Activated T-helper 2 cell treated with anti-CD3 and anti-CD28 coated beads, Interferon-gamma antibody, Interleukin-2, Interleukin-4, amounts not matched to agents 10 μg/mL and 5 μg/mL and 100 μg/mL, durations not matched to agents 14 hours and 24 hours and 36 hours (primary cell): ENCODE measurements at regions of chr4 and their contacts with region 1.

Region 1: GRCh38 chr4:142549726-142550463 is 296.2 kb downstream of the INPP4B start:
- DNase-seq: no peak
- H3K4me3 Mint-ChIP-seq: no peak overlapping the region
- H3K27ac Mint-ChIP-seq: peak overlapping the region; percentile 68
- H3K4me1 Mint-ChIP-seq: peaks cover 59% of the 10 kb centered on the region
- H3K27me3 Mint-ChIP-seq: no peaks in the 10 kb centered on the region

Region 2: GRCh38 chr4:142230991-142231390 is 318.9 kb before region 1 on chr4:
- intact Hi-C with region 1: no loop called
- DNase-seq: no peak
- H3K4me3 Mint-ChIP-seq: no peak overlapping the region
- H3K27ac Mint-ChIP-seq: no peak overlapping the region
- H3K4me1 Mint-ChIP-seq: peaks cover 6% of the 10 kb centered on the region
- H3K27me3 Mint-ChIP-seq: no peaks in the 10 kb centered on the region

Region 3: GRCh38 chr4:142353149-142353738 is 196.7 kb before region 1 on chr4:
- intact Hi-C with region 1: loop called (anchors 5 kb)
- DNase-seq: no peak
- H3K4me3 Mint-ChIP-seq: peak overlapping the region; percentile 15
- H3K27ac Mint-ChIP-seq: peak overlapping the region; percentile 88
- H3K4me1 Mint-ChIP-seq: peaks cover 89% of the 10 kb centered on the region
- H3K27me3 Mint-ChIP-seq: no peaks in the 10 kb centered on the region

Region 4: GRCh38 chr4:142435599-142436235 is 114.2 kb before region 1 on chr4:
- intact Hi-C with region 1: no loop called
- DNase-seq: no peak
- H3K4me3 Mint-ChIP-seq: no peak overlapping the region
- H3K27ac Mint-ChIP-seq: no peak overlapping the region
- H3K4me1 Mint-ChIP-seq: peaks cover 13% of the 10 kb centered on the region
- H3K27me3 Mint-ChIP-seq: no peaks in the 10 kb centered on the region

Region 5: DNA sequence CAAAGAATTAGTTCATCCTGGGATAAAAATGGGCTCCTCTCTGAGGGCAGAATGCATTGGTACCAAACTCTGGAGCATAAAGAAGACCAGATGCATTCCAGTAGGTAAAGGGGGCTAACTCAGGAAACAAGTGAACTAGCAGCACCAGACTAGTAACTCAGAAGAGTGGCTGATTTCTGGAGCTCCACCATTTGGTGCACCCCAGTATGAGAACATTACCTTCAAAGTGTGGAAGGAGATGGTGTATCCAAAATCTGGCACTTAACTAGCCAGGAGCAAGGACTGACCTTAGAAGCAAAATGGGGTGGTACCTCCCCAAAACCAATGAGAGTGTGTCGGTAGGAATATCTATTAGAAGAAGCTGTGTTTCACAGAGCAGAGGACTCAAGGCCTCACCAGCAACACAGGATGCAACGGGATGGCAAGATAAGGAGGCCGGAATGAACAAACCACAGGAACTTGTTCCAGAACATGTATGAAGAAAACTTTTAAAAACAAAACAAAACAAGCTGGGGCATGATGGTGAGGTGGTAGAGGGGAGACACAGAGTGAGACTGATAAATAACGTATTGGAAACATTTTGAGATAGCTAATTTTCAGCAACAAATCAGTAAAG is 153.9 kb after region 1 on chr4:
- intact Hi-C with region 1: loop called (anchors 2 kb)
- DNase-seq: peak; percentile 53
- H3K4me3 Mint-ChIP-seq: no peak overlapping the region
- H3K27ac Mint-ChIP-seq: no peak overlapping the region
- H3K4me1 Mint-ChIP-seq: peaks cover 29% of the 10 kb centered on the region
- H3K27me3 Mint-ChIP-seq: no peaks in the 10 kb centered on the region

Region 6: DNA sequence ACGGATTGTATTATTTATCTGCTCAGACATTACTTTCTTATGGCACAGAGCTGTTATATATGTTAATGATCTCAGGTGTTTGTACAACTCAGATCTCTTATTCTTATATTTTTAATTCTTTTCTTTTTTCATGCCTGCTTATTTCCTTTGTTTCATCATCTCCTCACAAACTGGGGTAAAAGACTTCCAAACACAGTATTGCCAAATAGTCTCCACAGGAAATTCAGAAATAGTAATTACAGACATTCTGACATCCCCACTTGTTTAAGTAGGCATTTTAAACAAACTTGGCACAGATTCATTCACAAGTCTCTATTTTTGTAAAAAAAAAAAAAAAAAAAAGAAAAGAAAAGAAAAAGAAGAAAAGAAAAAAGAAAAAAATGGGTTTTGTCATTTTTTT is 505.1 kb after region 1 on chr4:
- intact Hi-C with region 1: no loop called
- DNase-seq: no peak
- H3K4me3 Mint-ChIP-seq: no peak overlapping the region
- H3K27ac Mint-ChIP-seq: no peak overlapping the region
- H3K4me1 Mint-ChIP-seq: no peaks in the 10 kb centered on the region
- H3K27me3 Mint-ChIP-seq: no peaks in the 10 kb centered on the region

Region 7: GRCh38 chr4:143251779-143252178 is 701.9 kb after region 1 on chr4:
- intact Hi-C with region 1: no loop called
- DNase-seq: no peak
- H3K4me3 Mint-ChIP-seq: no peak overlapping the region
- H3K27ac Mint-ChIP-seq: no peak overlapping the region
- H3K4me1 Mint-ChIP-seq: no peaks in the 10 kb centered on the region
- H3K27me3 Mint-ChIP-seq: peaks cover 6% of the 10 kb centered on the region